CD4-positive, alpha-beta T cell (primary cell): ENCODE measurements at regions of chr2 and their contacts with region 1.

Region 1: GRCh38 chr2:84676295-84676694 is 160.0 kb downstream of the DNAH6 start:
- DNase-seq: no peak
- ATAC-seq: no peak
- H3K4me3 ChIP-seq: no peak overlapping the region
- H3K4me3 Mint-ChIP-seq: no peak overlapping the region
- H3K27ac ChIP-seq: no peak overlapping the region
- H3K27ac Mint-ChIP-seq: no peak overlapping the region
- H3K4me1 ChIP-seq: peaks cover 9% of the 10 kb centered on the region
- H3K4me1 Mint-ChIP-seq: peaks cover 49% of the 10 kb centered on the region
- H3K27me3 ChIP-seq: no peaks in the 10 kb centered on the region
- H3K27me3 Mint-ChIP-seq: no peaks in the 10 kb centered on the region
- CTCF ChIP-seq: no peak

Region 2: DNA sequence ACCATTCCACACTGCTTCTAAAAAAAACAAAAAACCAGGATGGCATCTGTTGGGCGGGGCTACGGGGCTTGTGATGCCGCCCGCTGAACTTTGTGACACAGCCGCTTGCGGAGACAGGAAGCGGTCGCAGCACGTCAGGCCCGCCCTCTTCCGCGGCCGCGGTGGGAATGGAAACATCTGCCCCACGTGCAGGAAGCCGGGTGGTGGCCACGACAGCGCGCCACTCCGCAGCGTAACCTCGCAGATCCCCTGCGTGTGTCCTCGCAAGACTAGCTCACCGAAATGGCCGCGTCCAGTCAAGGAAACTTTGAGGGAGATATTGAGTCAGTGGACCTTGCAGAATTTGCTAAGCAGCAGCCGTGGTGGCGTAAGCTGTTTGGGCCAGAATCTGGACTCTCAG is 385.8 kb before region 1 on chr2:
- CTCF ChIA-PET with region 1: no interaction called
- POLR2A ChIA-PET with region 1: no interaction called
- intact Hi-C with region 1: no loop called
- DNase-seq: peak in 4 of 14 experiments; percentile 5 to 26 (median 16)
- ATAC-seq: no peak
- H3K4me3 ChIP-seq: no peak overlapping the region
- H3K4me3 Mint-ChIP-seq: no peak overlapping the region
- H3K27ac ChIP-seq: no peak overlapping the region
- H3K27ac Mint-ChIP-seq: no peak overlapping the region
- H3K4me1 ChIP-seq: no peaks in the 10 kb centered on the region
- H3K4me1 Mint-ChIP-seq: no peaks in the 10 kb centered on the region
- H3K27me3 ChIP-seq: peaks cover 3 to 6% of the 10 kb centered on the region in 2 experiments
- H3K27me3 Mint-ChIP-seq: peaks cover 27% of the 10 kb centered on the region
- CTCF ChIP-seq: no peak

Region 3: GRCh38 chr2:84613082-84613481 is 63.2 kb before region 1 on chr2:
- CTCF ChIA-PET with region 1: no interaction called
- POLR2A ChIA-PET with region 1: no interaction called
- intact Hi-C with region 1: no loop called
- DNase-seq: no peak
- ATAC-seq: no peak
- H3K4me3 ChIP-seq: no peak overlapping the region
- H3K4me3 Mint-ChIP-seq: no peak overlapping the region
- H3K27ac ChIP-seq: no peak overlapping the region
- H3K27ac Mint-ChIP-seq: no peak overlapping the region
- H3K4me1 ChIP-seq: no peaks in the 10 kb centered on the region
- H3K4me1 Mint-ChIP-seq: no peaks in the 10 kb centered on the region
- H3K27me3 ChIP-seq: no peaks in the 10 kb centered on the region
- H3K27me3 Mint-ChIP-seq: no peaks in the 10 kb centered on the region
- CTCF ChIP-seq: no peak

Region 4: GRCh38 chr2:84686783-84687476 is 10.6 kb after region 1 on chr2:
- CTCF ChIA-PET with region 1: no interaction called
- POLR2A ChIA-PET with region 1: interaction called, 11 read pairs
- intact Hi-C with region 1: no loop called
- DNase-seq: peak in 2 of 14 experiments; percentile 17 to 28
- ATAC-seq: peak; percentile 66
- H3K4me3 ChIP-seq: no peak overlapping the region
- H3K4me3 Mint-ChIP-seq: peak overlapping the region; percentile 65
- H3K27ac ChIP-seq: no peak overlapping the region
- H3K27ac Mint-ChIP-seq: peak overlapping the region; percentile 80
- H3K4me1 ChIP-seq: peaks cover 2% of the 10 kb centered on the region
- H3K4me1 Mint-ChIP-seq: peaks cover 56% of the 10 kb centered on the region
- H3K27me3 ChIP-seq: no peaks in the 10 kb centered on the region
- H3K27me3 Mint-ChIP-seq: no peaks in the 10 kb centered on the region
- CTCF ChIP-seq: no peak

Region 5: GRCh38 chr2:84719434-84719833 is 43.1 kb after region 1 on chr2:
- CTCF ChIA-PET with region 1: no interaction called
- POLR2A ChIA-PET with region 1: interaction called, 3 read pairs
- intact Hi-C with region 1: loop called in 1 of 2 experiments (anchors 2 kb)
- DNase-seq: peak in 5 of 14 experiments; percentile 6 to 23 (median 13)
- ATAC-seq: no peak
- H3K4me3 ChIP-seq: peak overlapping the region; percentile 2
- H3K4me3 Mint-ChIP-seq: peak overlapping the region; percentile 63
- H3K27ac ChIP-seq: no peak overlapping the region
- H3K27ac Mint-ChIP-seq: peak overlapping the region; percentile 68
- H3K4me1 ChIP-seq: peaks cover 15% of the 10 kb centered on the region
- H3K4me1 Mint-ChIP-seq: peaks cover 60% of the 10 kb centered on the region
- H3K27me3 ChIP-seq: no peaks in the 10 kb centered on the region
- H3K27me3 Mint-ChIP-seq: no peaks in the 10 kb centered on the region
- CTCF ChIP-seq: no peak